ENCODE measurements at regions of chr5 and their contacts with region 1.

Region 1: GRCh38 chr5:77030097-77031071 is at the start of gene AGGF1:
- DNase-seq: peak; percentile 69 to 93 (median 90)
- ATAC-seq: peak; percentile 99
- H3K4me3 ChIP-seq: peak within 1 kb of the TSS; percentile 94
- H3K4me3 Mint-ChIP-seq: peak within 1 kb of the TSS; percentile 77 to 97 (median 94)
- H3K27ac ChIP-seq: peak within 1 kb of the TSS; percentile 86
- H3K27ac Mint-ChIP-seq: peak within 1 kb of the TSS; percentile 88 to 97 (median 92)
- H3K4me1 ChIP-seq: peaks cover 11 to 24% of the 10 kb centered on the region in 2 donors
- H3K4me1 Mint-ChIP-seq: peaks cover 19 to 58% (median 40%) of the 10 kb centered on the region in 7 donors
- H3K27me3 ChIP-seq: no peaks in the 10 kb centered on the region
- H3K27me3 Mint-ChIP-seq: peaks cover 0 to 9% (median 0%) of the 10 kb centered on the region in 5 donors
- total RNA-seq, gene AGGF1: 17.2 to 32.4 (median 29.2) TPM

Region 2: DNA sequence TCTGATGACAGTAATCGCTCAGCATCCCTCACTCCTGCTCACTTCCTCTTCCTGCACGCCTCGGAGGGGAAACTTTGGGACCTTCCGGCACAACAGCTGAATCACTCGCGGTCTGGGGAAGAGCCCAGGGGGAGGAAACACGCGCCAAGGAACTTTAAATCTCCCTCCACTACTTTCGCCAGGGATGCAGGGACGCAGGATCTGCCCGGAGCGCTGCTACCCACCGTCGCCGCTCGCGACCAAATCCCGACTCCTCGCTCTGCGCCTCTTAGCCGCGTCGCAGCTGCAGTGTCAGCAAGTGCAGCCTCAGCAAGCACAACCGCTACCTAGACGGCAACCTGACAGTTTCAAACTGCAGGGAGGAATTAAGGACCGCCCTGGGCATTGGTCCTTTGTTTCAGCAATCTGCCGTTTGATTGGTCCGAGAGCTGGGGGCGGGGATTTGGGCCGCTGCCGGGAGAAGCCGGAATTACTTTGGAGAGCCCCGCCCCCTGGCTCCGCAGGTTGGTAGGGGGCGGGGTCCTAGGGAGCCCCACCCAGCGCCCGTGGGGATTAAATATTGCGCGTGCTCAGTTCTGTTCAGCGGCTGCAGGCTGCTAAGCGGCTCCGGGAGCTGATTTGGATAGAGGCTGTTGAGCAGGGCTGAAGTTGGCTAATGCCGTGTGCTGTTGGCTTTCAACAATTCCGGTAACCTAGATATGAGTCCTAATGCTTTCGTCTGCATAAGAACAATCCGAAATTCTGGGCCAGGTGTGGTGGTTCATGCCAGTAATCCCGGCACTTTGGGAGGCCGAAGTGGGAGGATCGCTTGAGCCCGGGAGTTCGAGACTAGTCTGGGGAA is 1313.1 kb before region 1 on chr5 and contains the start of gene POC5:
- CTCF ChIA-PET with region 1: no interaction called
- POLR2A ChIA-PET with region 1: no interaction called
- intact Hi-C with region 1: loop called (anchors 1 kb)
- DNase-seq: peak; percentile 93 to 99 (median 98)
- ATAC-seq: peak; percentile 97
- H3K4me3 ChIP-seq: peak within 1 kb of the TSS; percentile 74
- H3K4me3 Mint-ChIP-seq: peak within 1 kb of the TSS; percentile 93 to 100 (median 99)
- H3K27ac ChIP-seq: peak within 1 kb of the TSS; percentile 78
- H3K27ac Mint-ChIP-seq: peak within 1 kb of the TSS; percentile 92 to 100 (median 97)
- H3K4me1 ChIP-seq: peaks cover 5 to 8% of the 10 kb centered on the region in 2 donors
- H3K4me1 Mint-ChIP-seq: peaks cover 26 to 47% (median 37%) of the 10 kb centered on the region in 7 donors
- H3K27me3 ChIP-seq: no peaks in the 10 kb centered on the region
- H3K27me3 Mint-ChIP-seq: peaks cover 0 to 10% (median 0%) of the 10 kb centered on the region in 5 donors
- total RNA-seq, gene POC5: 8.5 to 17.9 (median 15.0) TPM

Region 3: GRCh38 chr5:76473661-76474060 is 556.7 kb before region 1 on chr5:
- CTCF ChIA-PET with region 1: no interaction called
- POLR2A ChIA-PET with region 1: no interaction called
- intact Hi-C with region 1: loop called in 1 of 2 experiments (anchors 5 kb)
- DNase-seq: peak; percentile 13 to 89 (median 83)
- ATAC-seq: peak; percentile 95
- H3K4me3 ChIP-seq: no peak overlapping the region
- H3K4me3 Mint-ChIP-seq: peak overlapping the region; percentile 19 to 78 (median 58)
- H3K27ac ChIP-seq: peak overlapping the region; percentile 59
- H3K27ac Mint-ChIP-seq: peak overlapping the region; percentile 72 to 98 (median 93)
- H3K4me1 ChIP-seq: peaks cover 54 to 67% of the 10 kb centered on the region in 2 donors
- H3K4me1 Mint-ChIP-seq: peaks cover 56 to 88% (median 79%) of the 10 kb centered on the region in 7 donors
- H3K27me3 ChIP-seq: no peaks in the 10 kb centered on the region
- H3K27me3 Mint-ChIP-seq: no peaks in the 10 kb centered on the region

Region 4: DNA sequence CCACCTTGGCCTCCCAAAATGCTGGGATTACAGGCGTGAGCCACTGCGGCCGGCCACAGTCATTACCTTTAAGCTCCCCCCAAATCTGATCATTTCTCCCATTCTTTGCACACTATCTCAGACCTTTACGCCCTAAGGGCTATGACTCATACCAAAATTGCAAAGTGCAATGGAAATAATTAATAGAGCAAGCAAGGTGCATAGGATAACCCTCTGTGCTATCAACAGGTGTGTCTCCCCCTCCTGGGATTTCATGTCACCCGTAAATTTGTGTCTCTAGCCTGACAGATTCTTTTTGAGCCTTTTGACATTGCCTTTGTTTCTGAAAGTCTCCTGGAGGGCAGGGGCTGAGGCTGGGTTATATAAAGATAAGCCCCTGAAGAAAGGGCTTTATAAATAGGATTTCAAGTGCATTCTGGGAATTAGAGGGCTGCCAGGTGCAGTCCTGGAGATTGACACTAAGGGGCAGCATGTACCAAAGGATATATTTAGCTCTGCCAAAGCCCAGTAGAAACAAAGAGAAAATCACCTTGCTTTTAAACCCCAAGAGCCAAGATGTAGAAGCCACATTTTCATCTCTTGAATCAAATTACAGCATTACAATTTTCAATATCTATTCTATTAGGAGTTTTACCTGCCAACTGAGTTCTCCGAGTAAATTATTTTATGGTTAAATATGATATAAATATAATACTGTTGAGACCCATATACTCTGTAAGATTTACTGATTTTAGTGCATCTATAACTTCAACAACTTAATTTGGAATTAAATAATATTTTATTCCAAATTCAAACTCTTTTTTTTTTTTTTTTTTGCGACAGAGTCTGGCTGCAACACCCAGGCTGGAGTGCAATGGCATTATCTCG is 162.3 kb before region 1 on chr5:
- CTCF ChIA-PET with region 1: no interaction called
- POLR2A ChIA-PET with region 1: no interaction called
- intact Hi-C with region 1: loop called in 1 of 2 experiments (anchors 5 kb)
- DNase-seq: peak; percentile 14 to 63 (median 53)
- ATAC-seq: peak; percentile 90
- H3K4me3 ChIP-seq: no peak overlapping the region
- H3K4me3 Mint-ChIP-seq: no peak overlapping the region
- H3K27ac ChIP-seq: no peak overlapping the region
- H3K27ac Mint-ChIP-seq: no peak overlapping the region
- H3K4me1 ChIP-seq: no peaks in the 10 kb centered on the region
- H3K4me1 Mint-ChIP-seq: peaks cover 0 to 4% (median 0%) of the 10 kb centered on the region in 7 donors
- H3K27me3 ChIP-seq: no peaks in the 10 kb centered on the region
- H3K27me3 Mint-ChIP-seq: no peaks in the 10 kb centered on the region

Region 5: GRCh38 chr5:77086689-77087483 is 56.5 kb after region 1 on chr5 and contains the start of gene ZBED3:
- CTCF ChIA-PET with region 1: interaction called, 3 read pairs
- POLR2A ChIA-PET with region 1: interaction called, 9 read pairs
- intact Hi-C with region 1: loop called (anchors 1 to 2 kb)
- DNase-seq: peak; percentile 33 to 76 (median 60)
- ATAC-seq: peak; percentile 82
- H3K4me3 ChIP-seq: peak within 1 kb of the TSS; percentile 74
- H3K4me3 Mint-ChIP-seq: peak within 1 kb of the TSS; percentile 85 to 96 (median 93)
- H3K27ac ChIP-seq: peak within 1 kb of the TSS; percentile 62
- H3K27ac Mint-ChIP-seq: peak within 1 kb of the TSS; percentile 59 to 94 (median 86)
- H3K4me1 ChIP-seq: peaks cover 3 to 6% of the 10 kb centered on the region in 2 donors
- H3K4me1 Mint-ChIP-seq: peaks cover 5 to 20% (median 17%) of the 10 kb centered on the region in 7 donors
- H3K27me3 ChIP-seq: no peaks in the 10 kb centered on the region
- H3K27me3 Mint-ChIP-seq: peaks cover 0 to 12% (median 5%) of the 10 kb centered on the region in 5 donors
- total RNA-seq, gene ZBED3: 0.56 to 4.0 (median 2.8) TPM

Region 6: DNA sequence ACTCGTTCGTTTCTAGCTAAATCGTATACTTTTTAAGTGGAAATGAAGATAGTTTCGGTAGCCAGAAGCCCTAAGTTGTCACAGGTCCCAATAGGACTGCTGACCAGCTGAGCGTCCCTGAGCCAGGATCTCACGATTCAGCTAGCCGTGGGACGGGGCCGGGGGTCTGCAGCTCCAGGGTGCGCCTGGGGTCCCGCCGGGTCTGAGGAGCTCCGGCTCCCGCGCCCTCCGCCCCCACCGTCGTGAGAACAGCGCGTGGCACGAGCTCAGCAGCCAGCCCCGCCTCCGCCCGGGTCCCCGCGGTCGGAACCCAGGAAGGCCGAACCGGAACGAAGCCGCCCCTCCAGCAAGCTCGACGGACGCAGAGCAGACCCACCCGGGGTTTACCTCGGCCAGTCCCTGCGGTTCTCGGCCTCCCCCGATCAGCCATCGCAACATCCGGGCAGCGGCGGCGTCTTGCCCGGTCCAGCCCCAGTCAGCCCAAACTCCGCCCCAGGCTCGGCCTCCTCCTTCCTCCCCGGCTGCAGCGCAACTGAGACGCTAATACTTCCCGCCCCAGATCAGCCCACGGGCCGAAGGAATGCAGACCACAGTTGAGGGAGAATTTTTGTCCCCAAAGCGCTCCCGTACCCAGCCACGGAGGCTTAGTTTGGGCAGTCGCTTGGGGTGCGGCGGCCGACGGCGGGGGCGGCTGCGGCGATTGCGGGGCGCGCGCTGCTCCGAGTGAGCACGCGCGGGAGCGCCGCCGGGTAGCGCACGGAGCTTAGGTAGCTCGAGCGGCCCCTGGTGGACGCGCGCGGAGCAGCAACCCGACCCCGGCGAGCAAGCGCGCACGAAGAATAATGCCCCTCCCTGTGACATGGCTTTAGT is 461.6 kb after region 1 on chr5 and contains the start of gene WDR41:
- CTCF ChIA-PET with region 1: no interaction called
- POLR2A ChIA-PET with region 1: no interaction called
- intact Hi-C with region 1: loop called (anchors 2 to 5 kb)
- DNase-seq: peak; percentile 74 to 90 (median 85)
- ATAC-seq: peak; percentile 97
- H3K4me3 ChIP-seq: peak within 1 kb of the TSS; percentile 87
- H3K4me3 Mint-ChIP-seq: peak within 1 kb of the TSS; percentile 84 to 97 (median 90)
- H3K27ac ChIP-seq: peak within 1 kb of the TSS; percentile 82
- H3K27ac Mint-ChIP-seq: peak within 1 kb of the TSS; percentile 67 to 95 (median 88)
- H3K4me1 ChIP-seq: peaks cover 0 to 4% of the 10 kb centered on the region in 2 donors
- H3K4me1 Mint-ChIP-seq: peaks cover 6 to 28% (median 10%) of the 10 kb centered on the region in 7 donors
- H3K27me3 ChIP-seq: no peaks in the 10 kb centered on the region
- H3K27me3 Mint-ChIP-seq: peaks cover 8 to 27% (median 21%) of the 10 kb centered on the region in 5 donors
- total RNA-seq, gene WDR41: 6.0 to 23.8 (median 13.7) TPM

Region 7: GRCh38 chr5:78294248-78295034 is 1264.1 kb after region 1 on chr5 and contains the start of gene AP3B1:
- CTCF ChIA-PET with region 1: no interaction called
- POLR2A ChIA-PET with region 1: no interaction called
- intact Hi-C with region 1: loop called (anchors 5 to 10 kb)
- DNase-seq: peak; percentile 94 to 98 (median 96)
- ATAC-seq: peak; percentile 97
- H3K4me3 ChIP-seq: peak within 1 kb of the TSS; percentile 98
- H3K4me3 Mint-ChIP-seq: peak within 1 kb of the TSS; percentile 86 to 100 (median 98)
- H3K27ac ChIP-seq: peak within 1 kb of the TSS; percentile 88
- H3K27ac Mint-ChIP-seq: peak within 1 kb of the TSS; percentile 77 to 99 (median 97)
- H3K4me1 ChIP-seq: peaks cover 5 to 9% of the 10 kb centered on the region in 2 donors
- H3K4me1 Mint-ChIP-seq: peaks cover 27 to 50% (median 46%) of the 10 kb centered on the region in 7 donors
- H3K27me3 ChIP-seq: no peaks in the 10 kb centered on the region
- H3K27me3 Mint-ChIP-seq: peaks cover 0 to 11% (median 0%) of the 10 kb centered on the region in 5 donors
- total RNA-seq, gene AP3B1: 30.2 to 45.0 (median 37.2) TPM